T-cell (primary cell): ENCODE measurements at regions of chr2 and their contacts with region 1.

Region 1: GRCh38 chr2:68151037-68151436 is 6.7 kb upstream of the PNO1 start:
- DNase-seq: no peak
- ATAC-seq: no peak
- H3K4me3 ChIP-seq: no peak overlapping the region
- H3K4me3 Mint-ChIP-seq: no peak overlapping the region
- H3K27ac ChIP-seq: no peak overlapping the region
- H3K27ac Mint-ChIP-seq: peak overlapping the region; percentile 2 to 23
- H3K4me1 ChIP-seq: peaks cover 12 to 28% of the 10 kb centered on the region in 2 experiments
- H3K4me1 Mint-ChIP-seq: peaks cover 32 to 37% (median 37%) of the 10 kb centered on the region in 3 donors
- H3K27me3 ChIP-seq: no peaks in the 10 kb centered on the region
- H3K27me3 Mint-ChIP-seq: no peaks in the 10 kb centered on the region

Region 2: DNA sequence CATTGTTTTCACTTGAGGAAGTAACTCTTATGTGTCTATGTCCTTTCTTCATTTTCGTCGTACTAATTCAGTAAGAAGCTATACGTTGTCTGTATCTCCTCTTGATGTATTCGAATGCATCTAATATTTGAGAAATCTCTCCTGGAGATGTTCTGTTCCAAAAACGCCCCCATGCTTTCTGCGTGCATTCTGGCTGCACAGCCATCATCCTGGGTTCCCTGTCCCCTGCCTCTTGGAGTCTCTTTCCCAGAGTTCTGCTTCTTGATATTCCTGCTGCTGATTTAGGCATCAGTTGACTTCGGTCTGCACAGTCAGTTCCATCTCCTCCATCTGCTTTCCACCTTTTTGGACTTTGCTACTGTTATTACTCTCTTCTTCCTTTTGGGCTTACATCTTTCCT is 20.1 kb after region 1 on chr2:
- CTCF ChIA-PET with region 1: interaction called in 1 of 2 experiments, 3 read pairs
- POLR2A ChIA-PET with region 1: interaction called, 10 to 13 read pairs
- DNase-seq: no peak
- ATAC-seq: no peak
- H3K4me3 ChIP-seq: no peak overlapping the region
- H3K4me3 Mint-ChIP-seq: no peak overlapping the region
- H3K27ac ChIP-seq: no peak overlapping the region
- H3K27ac Mint-ChIP-seq: no peak overlapping the region
- H3K4me1 ChIP-seq: no peaks in the 10 kb centered on the region
- H3K4me1 Mint-ChIP-seq: peaks cover 23 to 29% (median 23%) of the 10 kb centered on the region in 3 donors
- H3K27me3 ChIP-seq: no peaks in the 10 kb centered on the region
- H3K27me3 Mint-ChIP-seq: no peaks in the 10 kb centered on the region

Region 3: GRCh38 chr2:68185541-68186164 is 34.6 kb after region 1 on chr2:
- CTCF ChIA-PET with region 1: interaction called, 3 to 12 read pairs
- POLR2A ChIA-PET with region 1: interaction called in 1 of 2 experiments, 3 read pairs
- DNase-seq: peak; percentile 4 to 81 (median 40)
- ATAC-seq: peak in 1 of 4 experiments; percentile 69
- H3K4me3 ChIP-seq: no peak overlapping the region
- H3K4me3 Mint-ChIP-seq: no peak overlapping the region
- H3K27ac ChIP-seq: no peak overlapping the region
- H3K27ac Mint-ChIP-seq: peak overlapping the region in 1 of 2 donors; percentile 44
- H3K4me1 ChIP-seq: peaks cover 2 to 5% of the 10 kb centered on the region in 2 experiments
- H3K4me1 Mint-ChIP-seq: peaks cover 37 to 48% (median 48%) of the 10 kb centered on the region in 3 donors
- H3K27me3 ChIP-seq: no peaks in the 10 kb centered on the region
- H3K27me3 Mint-ChIP-seq: no peaks in the 10 kb centered on the region

Region 4: GRCh38 chr2:68290901-68291300 is 139.9 kb after region 1 on chr2:
- CTCF ChIA-PET with region 1: interaction called in 1 of 2 experiments, 7 read pairs
- POLR2A ChIA-PET with region 1: interaction called in 1 of 2 experiments, 12 read pairs
- DNase-seq: no peak
- ATAC-seq: no peak
- H3K4me3 ChIP-seq: no peak overlapping the region
- H3K4me3 Mint-ChIP-seq: no peak overlapping the region
- H3K27ac ChIP-seq: no peak overlapping the region
- H3K27ac Mint-ChIP-seq: no peak overlapping the region
- H3K4me1 ChIP-seq: no peaks in the 10 kb centered on the region
- H3K4me1 Mint-ChIP-seq: peaks cover 0 to 4% (median 0%) of the 10 kb centered on the region in 3 donors
- H3K27me3 ChIP-seq: peaks cover 0 to 8% of the 10 kb centered on the region in 2 experiments
- H3K27me3 Mint-ChIP-seq: peaks cover 15 to 26% of the 10 kb centered on the region in 2 donors